Activated CD4-positive, alpha-beta memory T cell treated with anti-CD3 and anti-CD28 coated beads for 36 hours (primary cell): ENCODE measurements at regions of chr9 and their contacts with region 1.

Region 1: GRCh38 chr9:101530077-101530711 is 3.5 kb upstream of the RNF20 start:
- DNase-seq: peak; percentile 79
- H3K4me3 Mint-ChIP-seq: no peak overlapping the region
- H3K27ac Mint-ChIP-seq: no peak overlapping the region
- H3K4me1 Mint-ChIP-seq: peaks cover 20% of the 10 kb centered on the region
- H3K27me3 Mint-ChIP-seq: peaks cover 2% of the 10 kb centered on the region

Region 2: GRCh38 chr9:101449140-101449721 is 81.0 kb before region 1 on chr9:
- CTCF ChIA-PET with region 1: interaction called, 24 read pairs
- POLR2A ChIA-PET with region 1: no interaction called
- intact Hi-C with region 1: loop called (anchors 1 kb)
- DNase-seq: peak; percentile 65
- H3K4me3 Mint-ChIP-seq: peak overlapping the region; percentile 57
- H3K27ac Mint-ChIP-seq: no peak overlapping the region
- H3K4me1 Mint-ChIP-seq: peaks cover 13% of the 10 kb centered on the region
- H3K27me3 Mint-ChIP-seq: peaks cover 41% of the 10 kb centered on the region

Region 3: GRCh38 chr9:101458955-101459631 is 71.1 kb before region 1 on chr9:
- CTCF ChIA-PET with region 1: interaction called, 60 read pairs
- POLR2A ChIA-PET with region 1: no interaction called
- intact Hi-C with region 1: loop called (anchors 1 kb)
- DNase-seq: no peak
- H3K4me3 Mint-ChIP-seq: no peak overlapping the region
- H3K27ac Mint-ChIP-seq: no peak overlapping the region
- H3K4me1 Mint-ChIP-seq: no peaks in the 10 kb centered on the region
- H3K27me3 Mint-ChIP-seq: peaks cover 7% of the 10 kb centered on the region

Region 4: DNA sequence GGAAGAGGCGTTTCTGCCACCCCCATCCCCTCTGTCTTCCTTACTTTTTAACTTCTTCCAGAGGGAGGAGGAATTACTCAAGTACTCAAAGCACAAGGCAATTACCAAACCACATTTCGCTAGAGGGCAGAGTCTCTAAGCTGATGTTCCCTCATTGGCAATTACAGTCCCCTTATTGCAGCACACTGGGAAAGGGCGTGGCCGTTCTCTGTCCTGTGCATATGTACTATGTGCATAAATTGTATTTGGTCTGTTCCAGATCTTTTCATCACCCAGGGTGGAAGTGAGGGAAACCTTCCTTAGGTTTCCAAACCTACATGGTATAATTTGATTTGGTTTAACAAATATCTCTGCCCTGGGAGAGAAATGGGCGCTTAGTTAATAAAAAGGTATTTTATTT is 64.8 kb before region 1 on chr9:
- CTCF ChIA-PET with region 1: interaction called, 20 read pairs
- POLR2A ChIA-PET with region 1: no interaction called
- intact Hi-C with region 1: loop called (anchors 1 kb)
- DNase-seq: peak; percentile 13
- H3K4me3 Mint-ChIP-seq: no peak overlapping the region
- H3K27ac Mint-ChIP-seq: no peak overlapping the region
- H3K4me1 Mint-ChIP-seq: no peaks in the 10 kb centered on the region
- H3K27me3 Mint-ChIP-seq: peaks cover 35% of the 10 kb centered on the region

Region 5: DNA sequence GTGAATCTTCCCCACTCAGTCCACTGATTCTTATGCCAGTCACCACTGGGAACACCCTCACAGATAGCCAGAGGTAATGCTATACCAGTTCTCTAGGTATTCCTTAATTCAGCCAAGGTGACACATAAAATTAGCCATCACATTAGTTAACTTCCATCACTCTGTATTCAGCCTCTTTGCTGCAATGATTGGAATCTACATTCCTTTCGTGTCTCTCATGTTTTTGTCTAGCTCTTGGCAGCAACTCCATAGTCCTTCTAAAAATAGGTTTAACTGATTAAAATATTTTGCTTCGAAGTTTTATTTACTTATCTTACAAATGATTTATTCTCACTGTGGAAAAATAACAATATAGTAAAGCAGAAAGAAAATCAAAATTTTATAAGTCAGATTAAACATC is 16.1 kb before region 1 on chr9:
- CTCF ChIA-PET with region 1: interaction called, 5 read pairs
- POLR2A ChIA-PET with region 1: no interaction called
- intact Hi-C with region 1: loop called (anchors 1 kb)
- DNase-seq: no peak
- H3K4me3 Mint-ChIP-seq: no peak overlapping the region
- H3K27ac Mint-ChIP-seq: no peak overlapping the region
- H3K4me1 Mint-ChIP-seq: peaks cover 21% of the 10 kb centered on the region
- H3K27me3 Mint-ChIP-seq: peaks cover 8% of the 10 kb centered on the region

Region 6: GRCh38 chr9:101566904-101567724 is 36.9 kb after region 1 on chr9:
- CTCF ChIA-PET with region 1: interaction called, 5 read pairs
- POLR2A ChIA-PET with region 1: no interaction called
- intact Hi-C with region 1: loop called (anchors 1 kb)
- DNase-seq: peak; percentile 58
- H3K4me3 Mint-ChIP-seq: no peak overlapping the region
- H3K27ac Mint-ChIP-seq: no peak overlapping the region
- H3K4me1 Mint-ChIP-seq: peaks cover 52% of the 10 kb centered on the region
- H3K27me3 Mint-ChIP-seq: no peaks in the 10 kb centered on the region

Region 7: GRCh38 chr9:101572316-101572715 is 42.1 kb after region 1 on chr9:
- CTCF ChIA-PET with region 1: interaction called, 5 read pairs
- POLR2A ChIA-PET with region 1: no interaction called
- intact Hi-C with region 1: loop called (anchors 1 kb)
- DNase-seq: no peak
- H3K4me3 Mint-ChIP-seq: no peak overlapping the region
- H3K27ac Mint-ChIP-seq: peak overlapping the region; percentile 53
- H3K4me1 Mint-ChIP-seq: peaks cover 78% of the 10 kb centered on the region
- H3K27me3 Mint-ChIP-seq: no peaks in the 10 kb centered on the region